ENCODE measurements at regions of chr1 and their contacts with region 1.

Region 1: DNA sequence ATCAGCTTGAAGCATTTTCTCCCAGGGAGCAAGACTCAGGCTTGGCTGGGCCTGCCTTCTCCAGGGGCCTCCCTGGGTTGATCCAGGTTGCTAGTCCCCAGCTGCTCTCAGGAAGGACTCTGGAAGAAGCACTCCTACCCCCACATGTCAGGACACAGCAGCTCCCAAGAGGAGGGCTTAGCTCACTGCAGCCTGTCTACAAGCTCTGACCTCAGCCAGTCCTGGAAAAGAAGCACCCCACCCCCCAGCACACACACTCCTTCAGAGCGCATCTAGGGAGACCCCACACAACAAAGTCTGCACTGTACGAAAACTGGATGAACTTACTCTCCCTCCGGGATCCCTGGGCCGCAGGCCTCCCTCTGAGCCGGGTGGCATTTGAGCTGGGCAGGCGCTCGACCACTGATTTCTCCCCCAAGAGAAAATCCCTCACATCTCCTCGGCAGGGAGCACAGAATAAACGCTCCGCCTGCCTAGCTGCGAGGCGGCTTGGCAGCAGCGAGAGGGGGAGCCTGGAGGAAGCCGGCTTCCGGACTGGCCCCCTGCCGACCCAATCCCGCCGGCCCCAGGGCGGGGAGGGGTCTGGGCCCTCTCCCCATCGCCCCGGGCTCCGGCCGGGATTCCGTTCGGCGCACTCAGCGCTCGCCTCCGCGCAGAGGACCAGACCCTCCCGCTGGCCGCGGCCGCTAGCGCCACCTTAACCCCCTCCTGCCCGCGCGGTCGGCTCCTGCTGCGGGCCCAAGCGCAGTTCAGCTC is at the start of gene KCNA2:
- DNase-seq: peak; percentile 88
- H3K4me3 ChIP-seq: peak within 1 kb of the TSS; percentile 43 to 56
- H3K27ac ChIP-seq: no peak within 1 kb of the TSS
- H3K4me1 ChIP-seq: peaks cover 0 to 10% of the 10 kb centered on the region in 2 experiments; a peak in 2 of 4 replicates
- H3K27me3 ChIP-seq: peaks cover 60% of the 10 kb centered on the region
- CTCF ChIP-seq: no peak
- EP300 ChIP-seq: no peak
- RAD21 ChIP-seq: no peak
- polyA plus RNA-seq, gene KCNA2: not detected in 2 replicates

Region 2: GRCh38 chr1:110319332-110320152 is 286.5 kb before region 1 on chr1:
- CTCF ChIA-PET with region 1: no interaction called
- POLR2A ChIA-PET with region 1: no interaction called
- DNase-seq: no peak
- H3K4me3 ChIP-seq: no peak overlapping the region
- H3K27ac ChIP-seq: no peak overlapping the region
- H3K4me1 ChIP-seq: no peaks in the 10 kb centered on the region; a peak in 1 of 4 replicates
- H3K27me3 ChIP-seq: no peaks in the 10 kb centered on the region
- CTCF ChIP-seq: no peak
- EP300 ChIP-seq: no peak
- RAD21 ChIP-seq: no peak

Region 3: GRCh38 chr1:110338886-110339406 is 267.1 kb before region 1 on chr1 and contains the start of gene RBM15:
- CTCF ChIA-PET with region 1: no interaction called
- POLR2A ChIA-PET with region 1: no interaction called
- DNase-seq: peak; percentile 94
- H3K4me3 ChIP-seq: peak within 1 kb of the TSS; percentile 94 to 99
- H3K27ac ChIP-seq: peak within 1 kb of the TSS; percentile 98 to 99
- H3K4me1 ChIP-seq: peaks cover 29 to 44% of the 10 kb centered on the region in 2 experiments
- H3K27me3 ChIP-seq: no peaks in the 10 kb centered on the region
- CTCF ChIP-seq: no peak
- EP300 ChIP-seq: no peak; a peak in 1 of 4 replicates
- RAD21 ChIP-seq: no peak
- polyA plus RNA-seq, gene RBM15: 3.8 and 4.7 TPM in 2 replicates

Region 4: GRCh38 chr1:110594456-110595352 is 11.4 kb before region 1 on chr1:
- CTCF ChIA-PET with region 1: interaction called, 20 read pairs
- POLR2A ChIA-PET with region 1: no interaction called
- DNase-seq: no peak
- H3K4me3 ChIP-seq: no peak overlapping the region
- H3K27ac ChIP-seq: no peak overlapping the region
- H3K4me1 ChIP-seq: no peaks in the 10 kb centered on the region
- H3K27me3 ChIP-seq: no peaks in the 10 kb centered on the region; the same call in 1 of the 2 replicates
- CTCF ChIP-seq: no peak
- EP300 ChIP-seq: no peak
- RAD21 ChIP-seq: no peak

Measured in SK-N-SH (cell line).